Breast epithelium (tissue), 4 donors: ENCODE measurements at regions of chr2 and their contacts with region 1.

Region 1: GRCh38 chr2:96587843-96588242 is 50.3 kb downstream of the KANSL3 start:
- DNase-seq: no peak
- H3K4me3 ChIP-seq: no peak overlapping the region
- H3K27ac ChIP-seq: no peak overlapping the region
- H3K4me1 ChIP-seq: no peaks in the 10 kb centered on the region
- H3K27me3 ChIP-seq: no peaks in the 10 kb centered on the region
- CTCF ChIP-seq: no peak
- POLR2A ChIP-seq: no peak

Region 2: DNA sequence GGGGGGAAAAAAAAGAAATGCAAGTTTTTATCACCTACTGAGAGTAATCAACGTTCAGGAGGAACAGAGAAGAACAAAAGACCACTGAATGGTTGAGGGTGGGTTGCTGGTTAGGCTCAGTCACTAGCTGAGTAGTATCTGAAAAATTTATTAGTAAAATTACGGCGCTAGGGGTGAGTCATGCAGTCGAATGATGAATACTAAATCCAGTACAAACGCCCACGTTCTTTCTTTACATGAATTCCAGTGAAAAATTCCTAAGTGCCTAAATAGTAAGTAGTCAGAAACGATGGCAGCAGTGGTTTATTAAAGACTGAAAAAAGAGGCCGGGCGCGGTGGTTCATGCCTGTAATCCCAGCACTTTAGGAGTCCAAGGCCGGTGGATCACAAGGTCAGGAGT is 1664.6 kb before region 1 on chr2:
- intact Hi-C with region 1: no loop called
- DNase-seq: no peak
- H3K4me3 ChIP-seq: no peak overlapping the region
- H3K27ac ChIP-seq: no peak overlapping the region
- H3K4me1 ChIP-seq: no peaks in the 10 kb centered on the region
- H3K27me3 ChIP-seq: no peaks in the 10 kb centered on the region
- CTCF ChIP-seq: no peak
- POLR2A ChIP-seq: no peak

Region 3: DNA sequence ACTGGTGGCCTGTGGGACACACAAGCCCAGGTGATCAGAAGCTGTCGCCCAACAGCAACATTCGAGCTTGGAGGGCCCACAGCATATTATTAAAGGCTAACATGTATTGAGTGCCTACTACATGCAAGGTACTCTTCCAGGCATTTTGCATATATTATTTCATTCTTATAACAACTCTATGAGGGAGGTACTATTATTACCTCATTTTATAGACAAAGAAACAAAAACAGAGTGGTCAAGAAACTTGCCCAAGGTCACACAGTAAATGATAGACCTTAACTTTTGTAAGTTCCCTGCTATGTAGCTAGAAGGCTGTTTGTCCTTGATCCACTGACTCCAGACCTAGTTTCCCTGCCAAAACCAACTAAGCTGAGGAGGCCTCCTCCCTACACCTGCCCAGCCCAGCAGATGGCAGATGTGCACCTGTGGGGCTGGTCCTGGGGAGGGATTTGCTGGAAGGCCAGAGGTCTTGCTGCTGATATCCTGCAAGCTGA is 14.5 kb after region 1 on chr2:
- intact Hi-C with region 1: loop called (anchors 1 kb)
- DNase-seq: peak in 1 of 2 donors; percentile 61
- H3K4me3 ChIP-seq: no peak overlapping the region
- H3K27ac ChIP-seq: no peak overlapping the region
- H3K4me1 ChIP-seq: no peaks in the 10 kb centered on the region
- H3K27me3 ChIP-seq: no peaks in the 10 kb centered on the region
- CTCF ChIP-seq: peak in 1 of 3 donors; percentile 35
- POLR2A ChIP-seq: no peak